ENCODE measurements at regions of chr2 and their contacts with region 1.

Region 1: DNA sequence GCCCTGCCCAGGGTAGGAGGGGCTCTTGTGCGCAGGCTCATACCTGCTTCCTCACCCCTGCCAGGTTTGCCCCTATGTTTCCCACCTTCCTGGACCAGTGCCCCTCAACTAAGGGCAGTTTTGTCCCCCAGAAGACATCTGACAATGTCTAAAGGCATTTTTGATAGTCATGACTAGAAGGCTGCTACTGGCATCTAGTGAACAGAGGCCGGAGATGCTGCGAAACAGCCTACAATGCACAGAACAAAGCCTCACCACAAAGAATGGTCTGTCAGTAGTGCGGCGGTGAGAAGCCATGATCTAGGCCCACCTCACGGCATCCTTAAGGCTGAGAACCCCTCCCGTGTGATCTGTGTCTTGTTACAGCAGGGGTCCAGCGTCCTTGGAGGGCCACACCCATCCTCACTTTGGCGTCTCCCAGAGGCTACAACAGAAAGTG is 96.0 kb downstream of the TMEM17 start:
- DNase-seq: no peak
- ATAC-seq: no peak
- H3K4me3 ChIP-seq: no peak overlapping the region
- H3K27ac ChIP-seq: no peak overlapping the region
- H3K4me1 ChIP-seq: peaks cover 18% of the 10 kb centered on the region
- H3K27me3 ChIP-seq: no peaks in the 10 kb centered on the region
- CTCF ChIP-seq: no peak

Region 2: GRCh38 chr2:61789807-61790602 is 620.0 kb before region 1 on chr2:
- intact Hi-C with region 1: no loop called
- DNase-seq: no peak
- ATAC-seq: no peak
- H3K4me3 ChIP-seq: no peak overlapping the region
- H3K27ac ChIP-seq: no peak overlapping the region
- H3K4me1 ChIP-seq: no peaks in the 10 kb centered on the region
- H3K27me3 ChIP-seq: peaks cover 4% of the 10 kb centered on the region
- CTCF ChIP-seq: no peak

Region 3: DNA sequence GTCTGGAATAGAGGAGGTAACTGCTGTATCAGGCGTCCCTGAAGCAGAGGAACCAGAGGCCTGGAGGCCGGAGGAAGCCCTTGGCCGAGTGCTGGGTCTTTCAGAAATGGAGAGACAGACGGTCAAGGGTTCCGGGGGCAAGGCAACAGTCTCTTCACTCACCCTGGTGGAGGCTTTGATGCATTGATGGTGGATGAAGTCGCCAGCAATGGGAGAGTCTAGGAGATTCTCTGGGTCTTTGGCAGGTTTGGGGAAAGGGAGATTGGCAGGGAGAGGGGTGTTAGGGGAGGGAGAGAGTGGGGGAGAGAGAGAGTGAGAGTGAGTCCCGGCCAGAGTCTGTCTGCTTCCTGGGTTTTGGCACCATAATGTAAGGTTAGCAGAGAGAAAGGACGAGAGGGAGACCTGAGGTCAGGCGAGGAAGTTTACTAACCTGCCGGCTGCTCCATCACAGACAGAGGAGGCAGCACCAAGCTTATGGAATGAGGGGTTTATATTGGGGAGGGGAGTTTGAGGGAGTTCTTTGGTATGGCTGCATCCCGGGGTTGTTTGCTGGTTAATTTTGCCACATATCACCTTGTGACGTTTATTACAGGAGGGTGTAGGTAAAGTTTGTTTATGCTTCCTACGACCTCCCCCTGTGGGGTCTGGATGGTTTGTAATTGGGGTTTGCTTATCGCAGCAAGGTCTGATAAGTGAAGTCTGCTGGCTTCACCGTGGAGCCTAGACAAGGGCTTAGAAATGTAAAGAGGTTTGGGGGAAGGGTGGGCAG is 485.0 kb before region 1 on chr2:
- intact Hi-C with region 1: loop called (anchors 5 kb)
- DNase-seq: no peak
- ATAC-seq: no peak
- H3K4me3 ChIP-seq: no peak overlapping the region
- H3K27ac ChIP-seq: no peak overlapping the region
- H3K4me1 ChIP-seq: no peaks in the 10 kb centered on the region
- H3K27me3 ChIP-seq: no peaks in the 10 kb centered on the region
- CTCF ChIP-seq: no peak

Region 4: DNA sequence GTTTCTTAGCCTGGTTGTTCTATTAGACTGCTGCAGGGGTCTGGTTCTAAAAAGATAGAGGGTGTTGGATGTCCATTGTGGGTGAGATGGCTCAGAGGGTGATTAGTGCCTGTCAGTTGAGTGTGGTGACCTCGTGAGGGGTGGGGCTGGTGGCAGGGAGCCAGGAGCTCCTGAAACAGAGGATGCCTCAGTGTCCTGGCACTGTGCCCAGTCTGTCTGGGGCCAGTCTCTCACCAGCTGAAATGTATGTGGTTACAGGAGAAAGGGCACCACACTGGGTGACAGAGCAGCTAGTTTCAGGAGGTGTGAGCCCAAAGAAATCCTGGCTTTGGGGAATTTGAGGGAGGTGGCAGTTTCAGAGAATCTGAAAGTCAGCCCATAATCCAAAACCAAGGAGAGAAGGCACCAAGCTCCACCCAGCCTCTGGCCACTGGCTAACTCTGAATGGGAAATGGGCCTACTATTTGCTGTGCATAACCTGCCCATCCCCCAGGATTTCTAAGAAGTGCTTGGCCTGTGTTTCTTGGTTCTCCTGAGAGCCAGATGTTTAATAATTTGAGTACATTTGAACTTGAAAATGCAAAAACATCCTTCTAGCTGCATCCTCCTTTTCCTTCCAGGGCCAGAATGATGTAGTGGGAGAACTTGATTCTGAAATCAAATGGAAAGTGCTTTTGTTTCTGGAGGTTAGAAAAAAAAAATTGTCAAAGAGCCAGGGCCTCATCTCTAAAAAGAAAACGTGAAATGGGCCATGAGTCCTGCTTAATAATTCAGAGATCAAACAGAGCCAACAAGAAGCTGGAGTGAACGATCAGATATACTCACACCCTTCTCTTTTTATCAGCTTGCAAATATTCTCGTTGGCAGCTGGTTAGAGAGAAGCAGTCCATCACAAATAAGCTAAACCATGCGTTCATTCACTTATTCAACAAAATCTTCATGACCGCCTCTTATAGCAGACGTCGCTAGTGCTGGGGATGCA is 121.8 kb before region 1 on chr2:
- intact Hi-C with region 1: no loop called
- DNase-seq: peak; percentile 89
- ATAC-seq: peak; percentile 20 to 71
- H3K4me3 ChIP-seq: no peak overlapping the region
- H3K27ac ChIP-seq: no peak overlapping the region
- H3K4me1 ChIP-seq: peaks cover 34% of the 10 kb centered on the region
- H3K27me3 ChIP-seq: no peaks in the 10 kb centered on the region
- CTCF ChIP-seq: no peak

Measured in lower lobe of right lung (tissue), 2 donors.